ENCODE measurements at regions of chr19 and their contacts with region 1.

Region 1: DNA sequence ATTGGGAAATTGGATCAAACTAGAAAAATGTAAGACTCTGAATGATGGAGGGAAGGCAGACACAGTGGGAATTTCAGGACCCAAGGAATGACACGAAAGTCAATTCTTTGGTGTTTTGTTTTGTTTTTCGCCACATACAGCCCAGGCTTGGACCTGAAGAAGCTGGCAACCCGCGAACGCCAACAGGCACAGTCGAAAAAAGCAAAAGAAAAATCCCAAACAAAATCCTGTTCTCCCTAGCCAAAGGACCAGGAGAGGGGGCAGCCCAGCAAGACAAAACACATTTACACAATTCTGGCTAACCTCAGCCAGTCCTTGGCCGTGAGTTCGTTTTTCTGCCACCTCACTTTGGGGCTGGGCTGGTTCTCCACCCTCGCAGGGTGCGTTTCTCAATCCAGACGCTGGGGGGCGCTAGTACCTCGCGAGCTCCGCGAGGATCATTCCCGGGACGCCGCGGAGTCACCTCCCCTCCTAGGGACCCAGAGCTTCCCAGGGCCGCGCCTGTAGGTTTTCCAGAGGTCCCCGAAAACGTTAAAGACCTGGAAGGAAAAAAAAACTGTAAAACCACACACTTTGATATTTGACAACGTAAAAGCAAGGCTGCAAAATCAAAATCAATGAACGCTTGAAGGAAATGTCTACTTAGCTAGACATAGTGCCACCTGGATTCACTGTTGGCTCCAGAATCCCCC is 34.9 kb upstream of the TPM4 start:
- DNase-seq: peak; percentile 23
- H3K4me3 ChIP-seq: peak overlapping the region; percentile 38
- H3K27ac ChIP-seq: no peak overlapping the region
- H3K27me3 ChIP-seq: no peaks in the 10 kb centered on the region
- CTCF ChIP-seq: peak; percentile 97

Region 2: GRCh38 chr19:15722956-15723355 is 318.5 kb before region 1 on chr19:
- CTCF ChIA-PET with region 1: no interaction called
- POLR2A ChIA-PET with region 1: no interaction called
- DNase-seq: no peak
- H3K4me3 ChIP-seq: no peak overlapping the region
- H3K27ac ChIP-seq: no peak overlapping the region
- H3K27me3 ChIP-seq: no peaks in the 10 kb centered on the region
- CTCF ChIP-seq: no peak

Region 3: GRCh38 chr19:16062789-16063188 is 21.3 kb after region 1 on chr19:
- CTCF ChIA-PET with region 1: interaction called, 51 read pairs
- POLR2A ChIA-PET with region 1: interaction called, 21 read pairs
- DNase-seq: no peak
- H3K4me3 ChIP-seq: no peak overlapping the region
- H3K27ac ChIP-seq: no peak overlapping the region
- H3K27me3 ChIP-seq: no peaks in the 10 kb centered on the region
- CTCF ChIP-seq: peak; percentile 93

Region 4: GRCh38 chr19:16076154-16076957 is 34.9 kb after region 1 on chr19 and contains the start of gene TPM4:
- CTCF ChIA-PET with region 1: interaction called, 12 read pairs
- POLR2A ChIA-PET with region 1: interaction called, 7 read pairs
- DNase-seq: peak; percentile 93
- H3K4me3 ChIP-seq: peak within 1 kb of the TSS; percentile 89
- H3K27ac ChIP-seq: peak within 1 kb of the TSS; percentile 100
- H3K27me3 ChIP-seq: no peaks in the 10 kb centered on the region
- CTCF ChIP-seq: no peak
- polyA plus RNA-seq, gene TPM4: 1,635 and 2,058 TPM in 2 replicates

Region 5: DNA sequence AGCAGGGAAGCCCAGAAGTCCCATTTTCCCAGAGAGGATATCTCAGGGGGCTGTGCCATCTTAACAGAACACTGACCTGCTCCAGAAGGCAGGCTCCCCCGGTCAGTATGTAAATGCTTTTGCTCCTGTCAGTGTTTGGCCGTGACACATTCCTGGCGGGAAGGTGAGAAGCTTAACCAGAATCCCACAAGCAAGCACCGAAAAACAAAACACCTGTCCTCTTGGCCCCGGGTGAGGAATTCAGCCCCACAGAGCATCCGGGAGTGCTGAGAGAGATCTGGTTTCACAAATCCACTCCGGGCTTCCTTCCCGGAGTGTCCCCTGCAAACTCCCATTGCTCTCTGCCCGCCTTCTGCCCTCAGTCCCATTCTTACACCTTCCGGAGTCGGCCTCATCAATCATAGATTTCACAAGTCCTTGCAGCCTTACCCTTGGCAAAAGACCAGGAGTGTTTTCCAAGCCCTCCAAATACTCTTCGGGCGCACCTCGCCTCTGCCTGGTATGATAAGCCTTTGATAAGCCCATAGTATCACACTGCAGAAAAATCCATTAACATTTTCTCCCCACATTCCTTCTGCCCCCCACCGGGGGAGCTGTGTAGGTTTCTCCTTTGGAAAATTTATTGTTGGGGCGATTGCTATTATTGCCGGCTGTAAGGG is 47.0 kb after region 1 on chr19:
- CTCF ChIA-PET with region 1: interaction called, 6 read pairs
- POLR2A ChIA-PET with region 1: interaction called, 11 read pairs
- DNase-seq: no peak
- H3K4me3 ChIP-seq: no peak overlapping the region
- H3K27ac ChIP-seq: peak overlapping the region; percentile 31
- H3K27me3 ChIP-seq: no peaks in the 10 kb centered on the region
- CTCF ChIP-seq: peak; percentile 39

Region 6: GRCh38 chr19:16111160-16111908 is 69.9 kb after region 1 on chr19 and contains the start of gene RAB8A:
- CTCF ChIA-PET with region 1: interaction called, 34 read pairs
- POLR2A ChIA-PET with region 1: no interaction called
- DNase-seq: peak; percentile 98
- H3K4me3 ChIP-seq: peak within 1 kb of the TSS; percentile 95
- H3K27ac ChIP-seq: peak within 1 kb of the TSS; percentile 65
- H3K27me3 ChIP-seq: no peaks in the 10 kb centered on the region
- CTCF ChIP-seq: peak; percentile 78
- polyA plus RNA-seq, gene RAB8A: 107 and 109 TPM in 2 replicates

Region 7: GRCh38 chr19:16185123-16185767 is 143.8 kb after region 1 on chr19 and contains the start of gene FAM32A:
- CTCF ChIA-PET with region 1: interaction called, 41 read pairs
- POLR2A ChIA-PET with region 1: no interaction called
- DNase-seq: peak; percentile 98
- H3K4me3 ChIP-seq: peak within 1 kb of the TSS; percentile 94
- H3K27ac ChIP-seq: peak within 1 kb of the TSS; percentile 57
- H3K27me3 ChIP-seq: no peaks in the 10 kb centered on the region
- CTCF ChIP-seq: no peak
- polyA plus RNA-seq, gene FAM32A: 164 and 177 TPM in 2 replicates

Measured in AG04450 (cell line).